ENCODE measurements at regions of chr17 and their contacts with region 1.

Region 1: DNA sequence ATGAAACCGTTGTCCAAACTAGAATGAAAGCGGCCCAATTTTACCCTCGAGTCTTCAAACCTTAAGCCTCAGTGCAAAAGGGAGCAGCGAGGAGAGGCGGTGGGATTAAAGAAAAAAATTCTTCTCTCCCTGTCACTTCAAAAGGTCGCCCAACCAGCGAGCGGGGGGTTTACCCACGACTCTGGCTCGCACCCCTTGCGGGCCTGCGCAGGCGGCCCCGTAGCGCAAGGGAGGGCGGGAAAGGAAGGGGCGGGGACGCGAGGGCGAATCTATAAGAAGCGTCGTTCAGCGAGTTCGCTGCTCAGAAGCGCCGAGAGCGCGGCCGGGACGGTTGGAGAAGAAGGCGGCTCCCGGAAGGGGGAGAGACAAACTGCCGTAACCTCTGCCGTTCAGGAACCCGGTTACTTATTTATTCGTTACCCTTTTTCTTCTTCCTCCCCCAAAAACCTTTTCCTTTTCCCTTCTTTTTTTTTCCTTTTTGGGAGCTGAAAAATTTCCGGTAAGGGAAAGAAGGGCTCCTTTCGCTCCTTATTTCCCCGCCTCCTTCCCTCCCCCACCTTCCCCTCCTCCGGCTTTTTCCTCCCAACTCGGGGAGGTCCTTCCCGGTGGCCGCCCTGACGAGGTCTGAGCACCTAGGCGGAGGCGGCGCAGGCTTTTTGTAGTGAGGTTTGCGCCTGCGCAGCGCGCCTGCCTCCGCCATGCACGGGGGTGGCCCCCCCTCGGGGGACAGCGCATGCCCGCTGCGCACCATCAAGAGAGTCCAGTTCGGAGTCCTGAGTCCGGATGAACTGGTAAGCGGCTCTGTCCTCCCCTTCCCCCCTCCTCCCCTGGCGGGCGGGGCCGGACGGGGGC is at the start of gene POLR2A:
- DNase-seq: peak; percentile 98
- H3K4me3 ChIP-seq: peak within 1 kb of the TSS; percentile 91
- H3K27ac ChIP-seq: peak within 1 kb of the TSS; percentile 100
- H3K4me1 ChIP-seq: peaks cover 39% of the 10 kb centered on the region
- H3K27me3 ChIP-seq: no peaks in the 10 kb centered on the region
- CTCF ChIP-seq: 0 out of 2 replicates have a peak, but pooled peaks have one; percentile 14
- total RNA-seq, gene POLR2A: 330 and 341 TPM in 2 replicates

Region 2: GRCh38 chr17:6698004-6698509 is 786.2 kb before region 1 on chr17:
- CTCF ChIA-PET with region 1: no interaction called
- POLR2A ChIA-PET with region 1: interaction called, 12 read pairs
- intact Hi-C with region 1: no loop called
- DNase-seq: no peak
- H3K4me3 ChIP-seq: no peak overlapping the region
- H3K27ac ChIP-seq: no peak overlapping the region
- H3K4me1 ChIP-seq: no peaks in the 10 kb centered on the region
- H3K27me3 ChIP-seq: peaks cover 10% of the 10 kb centered on the region
- CTCF ChIP-seq: no peak

Region 3: DNA sequence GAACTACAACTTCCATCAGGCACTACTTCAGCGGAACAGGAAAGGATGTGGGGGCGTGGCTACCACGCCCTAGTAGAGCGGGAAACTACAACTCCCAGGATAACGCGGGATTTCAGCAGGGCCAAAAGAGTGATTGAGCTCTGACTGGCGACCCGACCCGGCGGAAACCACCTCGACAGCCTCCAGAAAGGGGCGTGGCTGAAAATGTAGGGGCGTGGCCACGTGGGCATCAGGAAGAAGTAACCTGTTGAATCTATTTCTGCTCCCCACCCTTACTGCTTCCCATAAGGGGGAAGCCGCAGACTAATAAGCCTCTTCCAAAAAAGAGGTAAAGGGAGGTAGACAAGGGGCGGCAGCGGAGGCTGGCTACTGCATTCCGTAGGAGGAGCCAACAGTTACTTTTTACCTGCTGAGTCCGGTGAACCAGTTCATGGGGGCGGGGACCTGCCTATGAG is 49.0 kb before region 1 on chr17 and contains the start of gene TMEM102:
- CTCF ChIA-PET with region 1: no interaction called
- POLR2A ChIA-PET with region 1: interaction called, 3 read pairs
- intact Hi-C with region 1: loop called (anchors 1 kb)
- DNase-seq: peak; percentile 99
- H3K4me3 ChIP-seq: peak within 1 kb of the TSS; percentile 90
- H3K27ac ChIP-seq: peak within 1 kb of the TSS; percentile 41
- H3K4me1 ChIP-seq: peaks cover 30% of the 10 kb centered on the region
- H3K27me3 ChIP-seq: no peaks in the 10 kb centered on the region
- CTCF ChIP-seq: no peak
- total RNA-seq, gene TMEM102: 3.2 and 4.7 TPM in 2 replicates

Region 4: DNA sequence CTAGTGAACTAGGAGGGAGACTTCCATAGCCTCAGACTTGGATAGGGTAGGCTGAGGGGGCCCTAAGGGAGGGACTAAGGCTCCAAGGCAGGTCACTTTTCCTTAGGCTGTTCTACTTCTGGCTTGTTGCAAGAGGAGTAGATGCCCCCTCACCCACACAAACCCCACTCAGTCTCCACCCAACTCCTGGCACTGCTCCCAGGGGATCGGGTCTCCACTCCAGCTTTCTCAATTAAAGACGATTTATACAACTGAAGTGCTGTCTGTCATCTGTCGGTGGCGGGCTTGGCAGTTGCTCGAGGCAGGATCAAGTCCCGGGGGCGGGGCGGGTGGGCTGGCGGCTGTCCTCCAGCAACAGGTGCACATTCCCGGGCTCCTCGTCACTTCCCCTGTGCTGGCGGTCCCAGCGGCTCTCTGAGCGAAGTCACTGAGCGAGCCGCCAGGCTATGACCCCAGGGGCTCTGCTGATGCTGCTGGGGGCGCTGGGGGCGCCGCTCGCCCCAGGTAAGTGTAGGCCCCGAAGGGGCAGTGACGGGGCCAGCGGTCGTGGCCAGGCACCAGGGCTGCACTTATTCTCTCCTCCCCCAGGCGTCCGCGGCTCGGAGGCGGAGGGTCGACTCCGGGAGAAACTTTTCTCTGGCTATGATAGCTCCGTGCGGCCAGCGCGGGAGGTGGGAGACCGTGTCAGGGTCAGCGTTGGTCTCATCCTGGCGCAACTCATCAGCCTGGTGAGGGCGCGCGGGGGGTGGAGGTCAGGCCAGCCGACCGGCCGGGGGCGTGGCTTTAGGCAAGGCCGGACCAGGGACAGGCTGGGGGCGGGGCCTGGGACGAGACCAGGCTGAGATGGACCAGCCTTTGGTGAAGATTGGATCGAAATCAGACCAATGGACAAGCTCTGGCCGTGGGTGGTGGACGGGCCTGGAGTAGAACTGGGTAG is 39.3 kb before region 1 on chr17 and contains the start of gene CHRNB1:
- CTCF ChIA-PET with region 1: interaction called, 4 read pairs
- POLR2A ChIA-PET with region 1: interaction called, 4 read pairs
- intact Hi-C with region 1: loop called (anchors 1 kb)
- DNase-seq: peak; percentile 68
- H3K4me3 ChIP-seq: peak within 1 kb of the TSS; percentile 45
- H3K27ac ChIP-seq: peak within 1 kb of the TSS; percentile 73
- H3K4me1 ChIP-seq: peaks cover 29% of the 10 kb centered on the region
- H3K27me3 ChIP-seq: no peaks in the 10 kb centered on the region
- CTCF ChIP-seq: no peak
- total RNA-seq, gene CHRNB1: 5.2 and 8.6 TPM in 2 replicates

Region 5: GRCh38 chr17:7552621-7553051 is 68.3 kb after region 1 on chr17:
- CTCF ChIA-PET with region 1: no interaction called
- POLR2A ChIA-PET with region 1: no interaction called
- intact Hi-C with region 1: no loop called
- DNase-seq: no peak
- H3K4me3 ChIP-seq: no peak overlapping the region
- H3K27ac ChIP-seq: no peak overlapping the region
- H3K4me1 ChIP-seq: peaks cover 3% of the 10 kb centered on the region
- H3K27me3 ChIP-seq: no peaks in the 10 kb centered on the region
- CTCF ChIP-seq: no peak

Measured in A673 (cell line).